PC-3 (cell line): ENCODE measurements at regions of chr5 and their contacts with region 1.

Region 1: DNA sequence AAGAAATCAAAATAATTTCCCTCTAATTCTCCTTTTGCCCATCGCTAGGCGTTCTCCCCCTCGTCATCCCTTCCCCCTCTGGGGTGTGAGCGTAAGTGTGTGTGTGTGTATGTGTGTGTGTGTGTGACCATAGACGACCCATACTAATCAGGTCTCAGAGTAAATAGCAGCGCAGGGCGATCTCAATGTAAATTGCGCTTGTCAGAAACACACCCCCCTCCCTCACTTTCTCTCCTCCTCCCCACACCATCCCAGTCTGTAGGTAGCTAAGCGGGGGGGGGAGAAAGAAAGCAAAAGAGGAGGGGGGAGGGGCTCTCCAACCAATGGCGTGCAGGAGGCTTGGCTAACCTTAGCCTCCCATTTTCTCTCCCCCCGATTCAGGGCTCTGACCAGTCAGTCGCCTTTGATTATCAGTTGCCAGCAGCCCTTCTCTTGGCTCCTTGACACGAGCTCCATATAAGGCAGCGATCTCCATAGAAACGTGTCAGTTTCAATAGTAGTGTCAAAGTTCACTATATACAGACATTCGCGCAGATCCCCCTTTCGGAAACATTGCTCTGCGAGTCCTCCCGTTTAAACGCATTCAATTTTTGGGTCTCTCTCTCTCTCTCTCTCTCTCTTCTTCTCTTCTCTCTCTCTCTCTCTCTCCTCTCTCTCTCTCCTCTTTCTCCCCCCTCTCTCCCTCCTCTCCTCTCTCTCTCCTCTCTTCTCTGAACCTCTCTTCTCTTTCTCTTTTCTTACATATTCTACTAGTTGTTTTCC is at the start of gene NR2F1:
- DNase-seq: peak; percentile 98
- ATAC-seq: peak; percentile 50
- H3K4me3 ChIP-seq: peak within 1 kb of the TSS; percentile 86
- H3K27ac ChIP-seq: peak within 1 kb of the TSS; percentile 70
- H3K4me1 ChIP-seq: peaks cover 20% of the 10 kb centered on the region
- H3K27me3 ChIP-seq: no peaks in the 10 kb centered on the region
- CTCF ChIP-seq: no peak
- total RNA-seq, gene NR2F1: 88.4 and 118 TPM in 2 replicates

Region 2: GRCh38 chr5:92552206-92553160 is 1030.4 kb before region 1 on chr5:
- CTCF ChIA-PET with region 1: no interaction called
- POLR2A ChIA-PET with region 1: no interaction called
- intact Hi-C with region 1: loop called (anchors 2 kb)
- DNase-seq: peak; percentile 88
- ATAC-seq: peak; percentile 86
- H3K4me3 ChIP-seq: no peak overlapping the region
- H3K27ac ChIP-seq: peak overlapping the region; percentile 92
- H3K4me1 ChIP-seq: peaks cover 8% of the 10 kb centered on the region
- H3K27me3 ChIP-seq: no peaks in the 10 kb centered on the region
- CTCF ChIP-seq: no peak

Region 3: DNA sequence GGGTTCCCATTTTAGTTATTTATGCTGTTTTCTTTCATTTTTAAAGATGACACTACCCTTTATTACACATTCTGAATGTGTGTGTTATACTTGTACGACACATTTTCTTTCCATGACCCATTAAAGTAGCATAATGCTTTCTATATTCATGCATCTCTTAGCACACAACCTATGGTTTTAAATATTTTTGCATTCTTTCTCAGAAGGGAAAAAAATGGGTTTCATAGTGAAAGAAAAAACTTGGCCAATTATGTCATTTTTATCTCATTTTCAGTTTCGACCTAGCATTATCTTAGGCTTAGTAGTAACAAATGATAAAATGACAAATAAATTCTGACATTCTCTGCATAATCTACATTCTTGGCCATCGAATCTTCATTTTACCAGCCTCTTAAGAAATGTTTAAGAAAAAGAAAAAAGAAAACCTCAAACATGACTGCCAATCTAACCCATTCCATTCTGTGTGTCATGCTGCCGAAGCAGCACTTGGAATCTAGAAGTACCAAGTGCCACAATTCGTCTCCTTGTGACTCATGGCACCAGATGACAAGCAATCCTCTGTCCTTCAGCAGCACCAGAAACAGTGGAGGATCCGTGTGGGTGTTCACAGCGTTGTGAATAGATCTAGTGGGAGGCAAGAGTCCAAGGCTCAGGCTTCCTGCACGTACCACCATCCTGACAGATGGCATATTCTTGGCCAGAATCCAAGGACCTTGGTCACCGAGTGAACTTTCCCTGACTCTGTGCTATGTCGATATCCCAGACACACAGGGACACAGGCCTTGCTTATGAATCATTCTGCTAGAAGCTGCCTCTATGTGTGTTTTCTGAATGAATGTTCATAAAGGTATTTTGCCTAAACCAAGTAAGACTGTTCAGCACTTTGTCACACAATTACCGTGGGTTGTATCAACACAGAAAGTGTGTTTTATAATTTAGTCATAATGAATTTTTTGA is 504.5 kb before region 1 on chr5:
- CTCF ChIA-PET with region 1: no interaction called
- POLR2A ChIA-PET with region 1: interaction called, 3 read pairs
- intact Hi-C with region 1: loop called (anchors 2 kb)
- DNase-seq: peak; percentile 100
- ATAC-seq: peak; percentile 92
- H3K4me3 ChIP-seq: peak overlapping the region; percentile 55
- H3K27ac ChIP-seq: peak overlapping the region; percentile 90
- H3K4me1 ChIP-seq: peaks cover 43% of the 10 kb centered on the region
- H3K27me3 ChIP-seq: no peaks in the 10 kb centered on the region
- CTCF ChIP-seq: no peak

Region 4: DNA sequence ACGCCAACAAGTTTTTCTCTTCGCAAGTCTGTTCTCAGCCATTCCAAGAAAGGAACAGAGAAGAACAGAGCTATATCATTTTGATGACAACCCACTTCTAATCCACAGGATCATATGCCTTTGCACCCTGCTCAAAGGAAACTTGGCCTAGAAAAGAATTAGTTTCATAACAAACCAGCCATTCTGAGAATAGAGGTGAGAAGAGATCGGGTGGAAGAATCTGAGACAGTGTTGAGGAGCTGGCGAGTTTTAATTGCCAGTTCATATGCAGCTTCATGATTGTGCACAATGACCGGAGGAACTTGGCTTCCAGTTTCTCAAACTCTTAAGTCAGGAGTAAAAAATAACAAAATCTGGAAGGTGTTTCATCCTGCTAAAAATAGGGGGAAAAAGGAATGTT is 381.8 kb before region 1 on chr5:
- CTCF ChIA-PET with region 1: no interaction called
- POLR2A ChIA-PET with region 1: no interaction called
- intact Hi-C with region 1: no loop called
- DNase-seq: no peak
- ATAC-seq: no peak
- H3K4me3 ChIP-seq: no peak overlapping the region
- H3K27ac ChIP-seq: no peak overlapping the region
- H3K4me1 ChIP-seq: no peaks in the 10 kb centered on the region
- H3K27me3 ChIP-seq: no peaks in the 10 kb centered on the region
- CTCF ChIP-seq: no peak

Region 5: DNA sequence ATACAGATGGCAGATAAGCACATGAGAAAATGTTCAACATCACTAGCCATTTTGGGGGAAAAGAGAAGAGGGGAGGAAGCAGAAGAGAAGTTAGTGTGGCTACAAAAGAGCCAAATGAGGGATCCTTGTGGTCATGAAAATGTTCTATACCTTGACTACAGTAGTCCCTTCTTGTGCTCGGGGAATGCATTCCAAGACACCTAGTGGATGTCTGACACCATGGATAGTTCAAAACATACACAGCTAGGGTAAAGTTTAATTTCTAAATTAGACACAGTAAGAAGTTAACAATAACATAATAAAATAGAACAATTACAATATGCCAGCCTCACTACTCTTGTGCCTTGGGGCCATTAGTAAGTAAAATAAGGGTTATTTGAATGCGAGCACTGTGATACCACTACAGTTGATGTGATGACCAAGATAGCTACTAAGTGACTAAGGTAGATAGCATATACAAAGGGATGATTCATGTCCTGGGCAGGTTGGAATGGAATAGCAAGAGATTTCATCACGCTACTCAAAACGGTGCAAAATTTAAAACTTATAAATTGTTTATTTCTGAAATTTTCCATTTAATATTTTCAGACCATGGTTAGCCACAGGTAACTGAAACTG is 345.9 kb before region 1 on chr5:
- CTCF ChIA-PET with region 1: interaction called, 3 read pairs
- POLR2A ChIA-PET with region 1: interaction called, 3 read pairs
- intact Hi-C with region 1: loop called (anchors 5 kb)
- DNase-seq: peak; percentile 90
- ATAC-seq: peak; percentile 90
- H3K4me3 ChIP-seq: no peak overlapping the region
- H3K27ac ChIP-seq: peak overlapping the region; percentile 73
- H3K4me1 ChIP-seq: peaks cover 45% of the 10 kb centered on the region
- H3K27me3 ChIP-seq: no peaks in the 10 kb centered on the region
- CTCF ChIP-seq: peak; percentile 35; the same call in 1 of the 2 replicates

Region 6: DNA sequence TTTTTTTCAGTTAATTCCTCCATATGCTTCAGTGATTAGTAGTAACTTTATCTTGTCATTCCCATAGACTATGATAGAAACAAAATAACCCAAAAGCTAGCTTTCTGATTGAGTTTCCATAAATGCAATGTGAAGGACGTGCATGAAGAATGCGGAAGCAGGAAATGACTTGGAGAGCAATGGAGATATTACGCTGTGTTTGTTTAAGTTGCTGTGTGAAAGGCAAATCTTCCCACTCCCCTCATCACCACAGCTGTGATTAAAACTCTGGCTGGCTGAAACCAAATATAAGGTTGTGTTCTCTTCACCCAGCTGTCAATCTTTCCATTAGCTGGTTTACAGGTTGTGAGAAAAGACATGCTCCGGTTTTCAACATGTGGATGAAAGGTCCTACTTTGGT is 85.8 kb before region 1 on chr5:
- CTCF ChIA-PET with region 1: no interaction called
- POLR2A ChIA-PET with region 1: interaction called, 31 read pairs
- intact Hi-C with region 1: no loop called
- DNase-seq: no peak
- ATAC-seq: no peak
- H3K4me3 ChIP-seq: no peak overlapping the region
- H3K27ac ChIP-seq: no peak overlapping the region
- H3K4me1 ChIP-seq: no peaks in the 10 kb centered on the region
- H3K27me3 ChIP-seq: no peaks in the 10 kb centered on the region
- CTCF ChIP-seq: no peak

Region 7: DNA sequence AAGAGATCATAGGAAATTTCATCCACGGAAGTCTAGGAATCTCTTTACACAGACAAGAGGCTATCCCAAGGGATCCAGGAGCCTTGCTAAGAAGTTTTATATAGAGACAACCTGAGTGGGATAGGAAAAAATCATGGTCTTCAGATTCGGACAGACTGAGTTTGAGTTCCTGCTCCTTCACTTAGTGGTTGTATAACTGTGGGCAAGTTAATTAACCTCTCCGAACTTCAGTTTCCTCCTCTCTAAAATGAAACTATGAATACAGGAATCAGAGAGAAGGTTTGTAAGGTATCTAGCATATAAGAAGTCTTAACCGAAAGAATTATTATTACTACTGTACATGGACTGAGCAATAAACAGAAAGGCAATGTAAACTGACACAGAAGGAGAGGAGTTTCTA is 37.0 kb before region 1 on chr5:
- CTCF ChIA-PET with region 1: no interaction called
- POLR2A ChIA-PET with region 1: no interaction called
- intact Hi-C with region 1: no loop called
- DNase-seq: no peak
- ATAC-seq: no peak
- H3K4me3 ChIP-seq: no peak overlapping the region
- H3K27ac ChIP-seq: no peak overlapping the region
- H3K4me1 ChIP-seq: no peaks in the 10 kb centered on the region
- H3K27me3 ChIP-seq: no peaks in the 10 kb centered on the region
- CTCF ChIP-seq: no peak

Region 8: DNA sequence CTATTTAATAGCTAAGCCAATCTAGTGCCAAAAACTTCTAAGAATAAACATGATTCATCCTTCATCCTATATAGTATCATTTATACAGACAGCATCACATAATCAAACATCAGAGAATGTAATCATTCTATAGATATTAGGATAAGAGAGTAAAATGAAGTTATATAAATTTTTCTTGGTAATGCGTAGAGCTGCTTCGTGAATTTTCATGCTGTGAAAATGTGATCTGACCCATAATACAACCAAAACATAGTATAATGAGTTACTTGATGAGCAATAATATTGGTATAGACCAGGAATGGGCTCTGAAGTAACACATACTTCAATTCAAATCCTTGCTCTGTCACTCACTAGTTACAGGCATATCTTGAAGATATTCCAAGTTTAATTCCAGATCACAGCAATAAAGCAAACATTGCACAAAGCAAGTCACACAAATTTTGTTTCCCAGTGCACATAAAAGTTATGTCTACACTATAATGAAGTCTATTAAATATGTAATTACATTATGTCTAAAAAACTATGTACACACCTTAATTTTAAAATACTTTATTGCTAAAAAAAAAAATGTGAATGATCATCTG is 25.7 kb before region 1 on chr5:
- CTCF ChIA-PET with region 1: no interaction called
- POLR2A ChIA-PET with region 1: no interaction called
- intact Hi-C with region 1: no loop called
- DNase-seq: peak; percentile 19
- ATAC-seq: peak; percentile 88
- H3K4me3 ChIP-seq: no peak overlapping the region
- H3K27ac ChIP-seq: peak overlapping the region; percentile 7; the same call in 1 of the 2 replicates
- H3K4me1 ChIP-seq: 0 out of 2 replicates have a peak, but pooled peaks cover 8% of the 10 kb centered on the region
- H3K27me3 ChIP-seq: no peaks in the 10 kb centered on the region
- CTCF ChIP-seq: no peak

Region 9: DNA sequence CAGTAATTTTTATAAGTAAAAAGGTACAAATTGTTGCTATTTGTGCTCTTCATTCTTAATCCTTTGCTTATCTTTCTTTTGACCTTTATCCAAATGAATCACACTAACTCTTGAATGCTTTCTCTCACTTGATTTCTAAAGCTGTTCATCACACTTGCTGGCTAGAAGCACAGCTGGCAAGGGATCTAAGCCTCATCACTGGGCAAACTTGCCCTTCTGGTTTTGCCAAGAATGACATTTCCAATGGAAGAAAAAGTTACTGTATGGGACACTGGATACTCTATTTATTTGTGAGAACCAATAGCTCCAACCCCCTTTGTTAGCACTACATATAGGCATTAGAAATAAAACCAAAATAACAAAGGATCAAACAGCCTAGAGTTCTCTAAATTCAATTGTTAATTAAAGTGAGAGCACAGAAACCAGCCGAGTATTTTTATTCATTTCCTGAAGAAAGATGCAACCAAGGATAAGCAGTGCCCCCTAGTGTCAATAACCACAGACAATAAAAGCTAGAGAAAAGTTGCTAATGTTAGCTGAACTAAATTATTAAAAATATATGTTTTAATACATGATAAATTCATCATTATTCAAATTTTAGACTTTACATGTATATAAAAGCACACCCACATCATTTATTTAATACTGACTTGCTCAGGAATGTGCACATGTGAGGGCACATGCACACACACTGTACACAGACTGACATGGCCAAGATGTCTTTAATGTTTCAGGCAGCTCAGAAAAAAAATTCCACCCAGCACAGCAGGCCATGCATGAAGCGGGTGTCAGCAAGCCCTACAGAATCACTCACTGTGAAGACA is 218.3 kb after region 1 on chr5:
- CTCF ChIA-PET with region 1: interaction called, 13 read pairs
- POLR2A ChIA-PET with region 1: interaction called, 3 read pairs
- intact Hi-C with region 1: loop called (anchors 1 kb)
- DNase-seq: peak; percentile 90
- ATAC-seq: peak; percentile 92
- H3K4me3 ChIP-seq: peak overlapping the region; percentile 36; the same call in 1 of the 2 replicates
- H3K27ac ChIP-seq: no peak overlapping the region
- H3K4me1 ChIP-seq: peaks cover 16% of the 10 kb centered on the region
- H3K27me3 ChIP-seq: no peaks in the 10 kb centered on the region
- CTCF ChIP-seq: peak; percentile 85